ENCODE measurements at regions of chr22 and their contacts with region 1.

Region 1: GRCh38 chr22:35627264-35628041 is 10.3 kb upstream of the MB start:
- DNase-seq: peak; percentile 76 to 79
- H3K4me3 ChIP-seq: peak overlapping the region; percentile 65
- H3K4me3 Mint-ChIP-seq: peak overlapping the region; percentile 79
- H3K27ac Mint-ChIP-seq: peak overlapping the region; percentile 78
- H3K4me1 ChIP-seq: peaks cover 8% of the 10 kb centered on the region
- H3K4me1 Mint-ChIP-seq: peaks cover 18% of the 10 kb centered on the region
- H3K27me3 ChIP-seq: no peaks in the 10 kb centered on the region; the same call in 1 of the 2 replicates
- H3K27me3 Mint-ChIP-seq: no peaks in the 10 kb centered on the region
- CTCF ChIP-seq: peak in 1 of 2 experiments; percentile 68

Region 2: DNA sequence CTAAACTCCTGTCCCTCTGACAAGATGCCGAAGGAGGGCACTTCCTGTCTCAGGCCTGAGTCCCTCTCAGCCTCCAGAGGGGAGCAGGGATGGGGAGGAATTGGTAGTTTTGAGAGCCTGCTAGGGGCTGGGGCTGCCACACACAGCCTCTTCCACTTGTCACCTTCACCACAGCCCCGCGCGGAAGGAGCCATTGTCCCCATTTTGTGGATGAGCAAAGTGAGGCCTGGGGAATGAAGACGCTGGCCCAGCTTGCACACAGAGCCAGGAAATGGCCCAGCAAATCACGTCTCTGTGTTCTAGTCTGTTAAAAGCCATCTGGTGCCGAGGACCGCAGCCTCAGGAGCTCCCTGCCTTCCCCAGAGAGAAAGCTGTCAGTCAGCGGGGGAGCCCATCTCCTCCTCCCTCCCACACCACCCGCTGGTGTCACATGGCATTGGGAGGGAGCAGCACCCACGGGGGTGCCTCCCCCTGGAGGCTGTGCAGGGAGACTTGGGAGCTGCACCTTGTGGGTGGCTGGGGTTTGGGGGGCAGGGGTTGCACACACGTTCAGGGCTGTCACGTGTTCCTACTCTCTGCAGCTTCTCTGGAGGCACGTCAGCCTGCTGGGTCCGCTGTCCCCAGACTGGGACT is 52.2 kb before region 1 on chr22:
- CTCF ChIA-PET with region 1: no interaction called
- POLR2A ChIA-PET with region 1: no interaction called
- intact Hi-C with region 1: no loop called
- DNase-seq: no peak
- H3K4me3 ChIP-seq: no peak overlapping the region
- H3K4me3 Mint-ChIP-seq: no peak overlapping the region
- H3K27ac Mint-ChIP-seq: no peak overlapping the region
- H3K4me1 ChIP-seq: no peaks in the 10 kb centered on the region
- H3K4me1 Mint-ChIP-seq: no peaks in the 10 kb centered on the region
- H3K27me3 ChIP-seq: no peaks in the 10 kb centered on the region
- H3K27me3 Mint-ChIP-seq: no peaks in the 10 kb centered on the region
- CTCF ChIP-seq: no peak

Region 3: DNA sequence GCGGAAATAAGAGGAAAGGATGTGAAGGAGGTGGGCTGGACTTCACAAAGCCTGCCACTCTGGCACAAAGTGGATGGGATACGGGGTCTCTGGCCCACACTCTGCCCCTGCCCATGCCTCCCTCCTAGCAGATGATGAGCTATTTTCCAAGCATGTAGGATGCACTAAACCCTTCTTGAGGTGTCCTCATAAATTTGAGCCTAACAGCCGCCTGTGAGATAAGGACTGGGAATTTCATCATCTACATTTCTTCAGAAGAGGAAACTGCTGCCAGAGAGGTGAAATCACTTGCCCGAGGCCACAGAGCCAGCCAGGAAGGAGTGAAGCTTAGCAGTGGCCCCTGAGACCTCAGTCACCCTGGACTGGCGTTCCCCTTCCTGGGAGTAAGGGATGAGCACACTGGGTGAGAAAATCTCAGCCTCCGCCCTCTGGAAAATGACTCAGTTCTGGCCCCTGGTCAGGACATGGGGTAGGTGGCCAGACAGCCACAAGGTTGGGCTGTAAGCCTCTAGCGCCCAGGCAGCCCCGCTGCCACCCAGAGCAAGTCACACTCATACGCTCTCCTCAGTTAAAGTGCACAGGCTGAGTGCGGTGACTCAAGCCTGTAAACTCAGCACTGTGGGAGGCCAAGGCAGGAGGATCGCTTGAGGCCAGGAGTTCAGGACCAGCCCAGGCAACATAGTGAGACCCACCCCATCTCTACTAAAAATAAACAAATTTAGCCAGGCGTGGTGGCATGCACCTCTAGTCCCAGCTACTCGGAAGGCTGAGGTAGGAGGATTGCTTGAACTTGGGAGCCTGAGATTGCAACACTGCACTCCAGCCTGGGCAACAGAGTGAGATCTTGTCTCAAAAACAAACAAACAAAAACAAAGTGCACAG is 38.1 kb before region 1 on chr22:
- CTCF ChIA-PET with region 1: no interaction called
- POLR2A ChIA-PET with region 1: interaction called, 3 read pairs
- intact Hi-C with region 1: loop called (anchors 1 kb)
- DNase-seq: peak; percentile 85 to 89
- H3K4me3 ChIP-seq: no peak overlapping the region
- H3K4me3 Mint-ChIP-seq: no peak overlapping the region
- H3K27ac Mint-ChIP-seq: peak overlapping the region; percentile 87
- H3K4me1 ChIP-seq: peaks cover 19% of the 10 kb centered on the region
- H3K4me1 Mint-ChIP-seq: peaks cover 28% of the 10 kb centered on the region
- H3K27me3 ChIP-seq: no peaks in the 10 kb centered on the region
- H3K27me3 Mint-ChIP-seq: no peaks in the 10 kb centered on the region
- CTCF ChIP-seq: no peak

Region 4: GRCh38 chr22:35663371-35663770 is 35.9 kb after region 1 on chr22:
- CTCF ChIA-PET with region 1: no interaction called
- POLR2A ChIA-PET with region 1: no interaction called
- intact Hi-C with region 1: no loop called
- DNase-seq: no peak
- H3K4me3 ChIP-seq: no peak overlapping the region
- H3K4me3 Mint-ChIP-seq: no peak overlapping the region
- H3K27ac Mint-ChIP-seq: no peak overlapping the region
- H3K4me1 ChIP-seq: peaks cover 14% of the 10 kb centered on the region; the same call in 1 of the 2 replicates
- H3K4me1 Mint-ChIP-seq: peaks cover 12% of the 10 kb centered on the region
- H3K27me3 ChIP-seq: no peaks in the 10 kb centered on the region
- H3K27me3 Mint-ChIP-seq: no peaks in the 10 kb centered on the region
- CTCF ChIP-seq: no peak

Region 5: DNA sequence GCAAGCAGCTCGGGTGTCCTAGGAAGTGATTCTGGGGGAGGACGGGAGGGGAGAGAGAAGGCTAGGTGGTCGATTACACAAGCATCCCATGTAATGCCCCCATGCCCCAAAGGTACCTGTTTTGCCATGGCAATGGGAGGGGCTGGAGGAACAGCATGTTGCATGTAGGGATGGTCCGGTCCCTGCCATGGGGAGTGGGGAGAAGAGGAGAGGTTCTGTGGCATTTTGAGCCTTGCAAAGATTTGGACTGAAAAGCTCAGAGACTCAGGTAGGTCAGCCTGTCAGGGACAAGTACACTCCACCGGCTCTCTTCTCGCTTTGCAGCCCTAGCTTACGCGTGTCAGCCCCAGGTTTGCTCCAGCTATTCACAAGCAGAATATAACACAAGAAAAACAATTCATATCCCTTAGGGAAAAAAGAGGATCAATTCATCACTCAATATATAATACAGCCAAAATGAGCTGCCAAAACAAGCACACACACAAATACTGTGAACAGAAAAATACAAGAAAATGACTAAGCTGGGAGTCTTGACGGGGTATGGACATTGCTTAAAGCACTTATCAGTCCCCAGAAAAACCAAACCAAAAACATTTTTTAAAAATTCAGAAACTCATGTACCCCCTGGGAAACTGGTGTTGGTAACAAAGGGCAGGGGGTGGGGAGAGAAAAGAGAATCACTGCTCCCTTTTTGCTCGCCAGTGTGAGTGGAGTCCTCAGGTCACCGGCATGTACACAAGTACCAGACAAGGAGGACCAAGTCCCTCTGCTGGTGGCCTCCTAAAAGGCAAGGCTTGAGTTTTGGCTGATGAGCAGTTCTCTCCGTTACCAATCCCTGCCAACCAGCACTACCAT is 111.8 kb after region 1 on chr22:
- CTCF ChIA-PET with region 1: interaction called, 4 read pairs
- POLR2A ChIA-PET with region 1: no interaction called
- intact Hi-C with region 1: loop called (anchors 1 kb)
- DNase-seq: peak in 1 of 2 experiments; percentile 47
- H3K4me3 ChIP-seq: no peak overlapping the region
- H3K4me3 Mint-ChIP-seq: no peak overlapping the region
- H3K27ac Mint-ChIP-seq: no peak overlapping the region
- H3K4me1 ChIP-seq: no peaks in the 10 kb centered on the region
- H3K4me1 Mint-ChIP-seq: no peaks in the 10 kb centered on the region
- H3K27me3 ChIP-seq: no peaks in the 10 kb centered on the region
- H3K27me3 Mint-ChIP-seq: no peaks in the 10 kb centered on the region
- CTCF ChIP-seq: peak; percentile 12 to 58

Region 6: DNA sequence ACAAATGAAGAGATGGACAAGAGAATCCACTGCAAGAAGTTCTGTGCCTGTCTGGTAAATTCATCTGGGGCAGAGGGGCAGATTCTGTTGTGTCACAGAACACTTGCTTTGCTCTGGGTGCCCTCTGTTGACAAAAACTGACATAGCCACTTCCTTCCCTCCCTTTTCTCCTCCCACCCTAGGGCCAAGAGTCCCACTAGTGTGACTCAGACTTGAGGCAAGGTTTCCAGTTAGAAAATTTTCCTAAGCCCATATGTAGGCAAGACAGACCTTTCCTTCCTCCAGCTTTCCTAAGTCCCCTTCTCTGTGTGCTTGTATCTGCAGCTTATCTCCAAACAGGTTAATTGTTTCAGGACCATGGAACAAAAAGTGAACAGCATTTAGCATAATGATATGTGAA is 294.3 kb after region 1 on chr22:
- CTCF ChIA-PET with region 1: no interaction called
- POLR2A ChIA-PET with region 1: no interaction called
- intact Hi-C with region 1: loop called (anchors 1 kb)
- DNase-seq: peak; percentile 76 to 77
- H3K4me3 ChIP-seq: no peak overlapping the region
- H3K4me3 Mint-ChIP-seq: no peak overlapping the region
- H3K27ac Mint-ChIP-seq: no peak overlapping the region
- H3K4me1 ChIP-seq: peaks cover 24% of the 10 kb centered on the region
- H3K4me1 Mint-ChIP-seq: peaks cover 33% of the 10 kb centered on the region
- H3K27me3 ChIP-seq: no peaks in the 10 kb centered on the region
- H3K27me3 Mint-ChIP-seq: no peaks in the 10 kb centered on the region
- CTCF ChIP-seq: peak; percentile 49 to 69

Measured in Caco-2 (cell line).